ENCODE measurements at regions of chr19 and their contacts with region 1.

Region 1: GRCh38 chr19:46030812-46031550 is 8.1 kb upstream of the PGLYRP1 start:
- DNase-seq: no peak
- ATAC-seq: no peak
- H3K4me3 ChIP-seq: no peak overlapping the region
- H3K27ac ChIP-seq: no peak overlapping the region
- H3K4me1 ChIP-seq: no peaks in the 10 kb centered on the region
- H3K27me3 ChIP-seq: no peaks in the 10 kb centered on the region

Region 2: DNA sequence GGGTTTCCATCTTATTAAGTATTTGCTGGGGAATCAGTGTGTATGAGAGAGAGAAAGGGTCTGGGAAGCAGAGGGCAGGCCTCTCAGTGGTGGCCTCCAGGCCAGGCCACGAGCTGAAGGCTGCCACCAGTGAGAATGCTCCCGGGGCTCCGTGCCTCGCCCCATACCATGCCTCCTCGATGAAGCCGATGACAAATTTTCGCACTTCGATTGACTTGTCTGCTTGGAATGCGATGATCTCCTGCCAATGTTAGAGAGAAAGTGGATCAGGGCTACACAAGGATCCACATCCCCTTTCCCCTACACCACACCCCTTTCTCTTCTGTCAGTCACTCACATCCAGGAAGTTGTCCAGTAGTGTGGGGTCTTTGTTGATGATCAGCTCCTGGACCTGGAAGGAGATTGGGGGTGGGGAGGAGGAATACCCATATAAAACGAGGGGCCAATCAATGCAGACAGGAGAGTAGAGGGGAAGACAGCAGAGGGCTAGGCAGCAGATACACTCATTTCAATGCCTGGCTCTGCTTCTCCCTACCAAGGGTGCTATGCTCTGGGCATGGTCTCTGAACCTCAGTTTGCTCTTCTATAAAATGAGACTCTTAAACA is 178.7 kb before region 1 on chr19:
- intact Hi-C with region 1: no loop called
- DNase-seq: no peak
- ATAC-seq: no peak
- H3K4me3 ChIP-seq: no peak overlapping the region
- H3K27ac ChIP-seq: no peak overlapping the region
- H3K4me1 ChIP-seq: no peaks in the 10 kb centered on the region
- H3K27me3 ChIP-seq: no peaks in the 10 kb centered on the region

Region 3: GRCh38 chr19:45952686-45953505 is 78.1 kb before region 1 on chr19:
- intact Hi-C with region 1: no loop called
- DNase-seq: peak; percentile 57 to 83 (median 82)
- ATAC-seq: peak; percentile 39 to 61
- H3K4me3 ChIP-seq: no peak overlapping the region
- H3K27ac ChIP-seq: no peak overlapping the region
- H3K4me1 ChIP-seq: peaks cover 1% of the 10 kb centered on the region
- H3K27me3 ChIP-seq: no peaks in the 10 kb centered on the region

Region 4: GRCh38 chr19:46265217-46265828 is 234.3 kb after region 1 on chr19:
- intact Hi-C with region 1: loop called (anchors 2 to 5 kb)
- DNase-seq: peak in 1 of 3 donors; percentile 42
- ATAC-seq: peak; percentile 67 to 85
- H3K4me3 ChIP-seq: no peak overlapping the region
- H3K27ac ChIP-seq: no peak overlapping the region
- H3K4me1 ChIP-seq: no peaks in the 10 kb centered on the region
- H3K27me3 ChIP-seq: no peaks in the 10 kb centered on the region